ENCODE measurements at regions of chr22 and their contacts with region 1.

Region 1: GRCh38 chr22:21641789-21642583 is at the start of gene SDF2L1:
- DNase-seq: peak; percentile 99
- ATAC-seq: peak; percentile 98
- H3K4me3 Mint-ChIP-seq: peak within 1 kb of the TSS; percentile 83
- H3K27ac Mint-ChIP-seq: peak within 1 kb of the TSS; percentile 90
- H3K4me1 Mint-ChIP-seq: peaks cover 33% of the 10 kb centered on the region
- H3K27me3 Mint-ChIP-seq: no peaks in the 10 kb centered on the region
- total RNA-seq, gene SDF2L1: 78.7 to 79.1 TPM

Region 2: DNA sequence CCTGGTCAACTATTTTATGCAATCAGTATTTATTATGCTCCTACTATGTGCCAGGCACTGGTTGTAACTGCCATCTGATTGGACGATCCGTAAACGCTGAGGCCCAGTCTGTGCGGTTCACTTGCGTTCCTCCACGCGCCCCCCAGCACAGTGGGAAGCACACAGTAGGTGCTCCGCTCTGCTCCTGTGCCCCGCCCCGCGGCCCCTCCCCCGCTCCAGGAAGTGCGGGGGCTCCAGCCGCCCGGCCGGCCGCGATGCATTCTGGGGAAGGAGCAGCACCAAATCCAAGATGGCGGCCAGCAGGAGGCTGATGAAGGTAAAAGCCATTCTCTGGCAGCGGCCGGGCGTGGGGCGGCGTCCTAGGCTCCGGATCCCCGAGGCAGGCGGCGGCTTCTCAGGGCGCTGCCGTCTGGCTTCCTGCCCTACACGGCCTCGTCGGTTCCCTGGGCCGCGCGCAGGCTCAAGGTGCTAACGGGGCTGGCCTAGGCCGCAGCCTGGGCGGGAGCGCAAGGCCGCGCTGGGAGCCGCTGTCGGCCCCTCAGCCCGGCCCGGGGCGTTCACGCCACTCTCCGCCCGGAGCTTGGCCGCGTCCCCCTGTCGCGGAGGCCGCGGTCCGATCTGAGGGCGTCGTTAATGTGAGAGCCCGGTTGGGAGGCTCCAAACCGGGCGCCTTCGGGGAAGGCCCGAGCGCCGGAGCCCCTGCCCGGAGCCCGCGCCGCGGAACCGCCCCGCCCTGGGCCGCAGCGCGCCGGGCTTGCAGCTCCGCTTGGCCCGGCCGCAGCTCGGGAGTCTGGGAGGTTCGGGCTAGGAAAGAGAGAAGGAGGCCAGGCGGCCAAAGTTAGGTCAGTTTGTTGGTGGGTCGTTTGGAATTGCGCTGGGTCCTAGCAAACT is 74.3 kb before region 1 on chr22 and contains the start of gene UBE2L3:
- CTCF ChIA-PET with region 1: interaction called, 20 read pairs
- DNase-seq: peak; percentile 91
- ATAC-seq: peak; percentile 72
- H3K4me3 Mint-ChIP-seq: peak within 1 kb of the TSS; percentile 97
- H3K27ac Mint-ChIP-seq: peak within 1 kb of the TSS; percentile 93
- H3K4me1 Mint-ChIP-seq: peaks cover 40% of the 10 kb centered on the region
- H3K27me3 Mint-ChIP-seq: no peaks in the 10 kb centered on the region
- total RNA-seq, gene UBE2L3: 57.3 to 67.8 TPM

Region 3: DNA sequence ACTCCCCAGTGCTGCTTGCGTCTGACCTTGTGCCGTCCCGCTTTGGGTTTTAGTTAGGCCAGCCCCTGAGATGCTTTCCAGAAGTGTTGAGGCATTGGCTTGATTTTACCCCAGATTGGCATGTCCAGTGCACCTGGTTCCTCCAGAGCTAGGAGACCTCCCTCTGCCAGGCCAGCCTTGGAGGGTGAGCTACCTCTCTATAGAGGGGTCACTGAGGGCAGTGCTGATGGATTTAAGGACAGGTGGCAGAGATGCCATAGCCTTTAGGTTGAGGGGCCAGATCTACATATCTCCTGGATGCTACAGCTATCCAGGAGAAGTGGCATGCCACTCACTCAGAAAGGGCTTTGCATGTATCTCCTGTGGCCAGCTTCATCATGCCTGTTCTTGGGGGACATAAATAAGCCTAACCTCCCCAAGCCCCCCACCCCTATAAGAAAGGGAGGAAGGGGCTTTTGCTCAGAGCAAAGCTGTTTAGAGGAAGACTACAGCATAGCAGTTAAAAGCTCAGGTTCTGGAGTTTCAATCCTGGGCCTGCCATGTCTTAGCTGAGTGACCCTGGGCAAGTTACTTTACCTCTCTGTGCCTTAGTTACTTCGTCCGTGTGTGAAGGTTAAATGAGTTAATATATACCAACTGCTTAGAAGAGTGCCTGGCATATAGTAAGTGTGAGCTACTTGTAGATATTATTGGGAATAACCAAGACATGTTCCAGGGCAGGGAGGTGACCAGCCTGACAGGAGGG is 68.1 kb before region 1 on chr22:
- CTCF ChIA-PET with region 1: interaction called, 20 read pairs
- DNase-seq: no peak
- ATAC-seq: no peak
- H3K4me3 Mint-ChIP-seq: no peak overlapping the region
- H3K27ac Mint-ChIP-seq: no peak overlapping the region
- H3K4me1 Mint-ChIP-seq: peaks cover 60% of the 10 kb centered on the region
- H3K27me3 Mint-ChIP-seq: no peaks in the 10 kb centered on the region

Region 4: DNA sequence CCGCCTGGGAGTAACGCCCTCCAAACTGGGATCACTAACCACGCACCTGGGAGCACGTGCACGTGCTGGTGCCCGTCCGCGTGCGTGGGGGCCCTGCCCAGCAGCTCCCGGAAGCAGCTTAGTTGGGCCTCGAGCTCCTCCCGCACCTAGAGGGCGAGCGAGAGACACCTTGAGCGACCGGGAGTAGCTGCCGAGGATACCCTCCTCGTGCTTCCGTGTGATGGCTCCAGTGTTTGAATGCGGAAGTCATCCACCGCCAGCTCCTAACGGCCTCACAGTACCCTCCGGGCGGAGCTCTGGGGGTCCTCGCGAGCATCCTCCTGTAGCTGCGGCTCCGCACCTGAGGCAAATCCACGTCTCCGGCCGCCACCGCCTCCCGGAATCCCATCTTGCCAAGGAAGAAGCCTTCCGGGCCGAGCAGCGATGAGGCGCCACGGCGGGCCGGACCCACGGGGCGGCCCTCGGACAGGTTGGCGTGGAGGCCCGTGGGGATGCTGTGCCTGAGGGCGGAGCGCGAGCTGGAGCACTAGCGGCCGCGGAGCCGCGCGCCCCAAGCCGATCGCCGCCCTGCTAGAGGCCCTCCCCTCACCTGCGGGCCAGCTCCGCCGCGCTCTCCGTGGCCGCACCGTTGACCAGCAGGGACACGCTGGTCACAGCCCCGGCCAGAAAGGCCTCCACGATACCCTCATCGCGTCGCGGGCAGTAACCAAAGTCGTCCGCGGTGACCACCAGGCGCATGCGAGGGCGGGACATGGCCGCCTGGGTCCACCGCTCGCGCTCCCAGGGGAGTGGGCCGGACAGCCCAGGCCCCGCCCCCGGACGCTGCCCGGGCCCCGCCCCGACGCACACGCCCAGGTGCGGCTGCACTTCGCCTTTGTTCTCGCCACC is 12.5 kb before region 1 on chr22 and contains the start of gene YDJC:
- CTCF ChIA-PET with region 1: interaction called, 241 read pairs
- DNase-seq: peak; percentile 96
- ATAC-seq: peak; percentile 84
- H3K4me3 Mint-ChIP-seq: peak within 1 kb of the TSS; percentile 86
- H3K27ac Mint-ChIP-seq: peak within 1 kb of the TSS; percentile 93
- H3K4me1 Mint-ChIP-seq: peaks cover 47% of the 10 kb centered on the region
- H3K27me3 Mint-ChIP-seq: no peaks in the 10 kb centered on the region
- total RNA-seq, gene YDJC: 43.7 to 44.3 TPM

Region 5: GRCh38 chr22:21652010-21652546 is 10.1 kb after region 1 on chr22:
- CTCF ChIA-PET with region 1: interaction called, 44 read pairs
- DNase-seq: peak; percentile 94
- ATAC-seq: peak; percentile 99
- H3K4me3 Mint-ChIP-seq: peak overlapping the region; percentile 88
- H3K27ac Mint-ChIP-seq: peak overlapping the region; percentile 87
- H3K4me1 Mint-ChIP-seq: peaks cover 32% of the 10 kb centered on the region
- H3K27me3 Mint-ChIP-seq: no peaks in the 10 kb centered on the region

Region 6: DNA sequence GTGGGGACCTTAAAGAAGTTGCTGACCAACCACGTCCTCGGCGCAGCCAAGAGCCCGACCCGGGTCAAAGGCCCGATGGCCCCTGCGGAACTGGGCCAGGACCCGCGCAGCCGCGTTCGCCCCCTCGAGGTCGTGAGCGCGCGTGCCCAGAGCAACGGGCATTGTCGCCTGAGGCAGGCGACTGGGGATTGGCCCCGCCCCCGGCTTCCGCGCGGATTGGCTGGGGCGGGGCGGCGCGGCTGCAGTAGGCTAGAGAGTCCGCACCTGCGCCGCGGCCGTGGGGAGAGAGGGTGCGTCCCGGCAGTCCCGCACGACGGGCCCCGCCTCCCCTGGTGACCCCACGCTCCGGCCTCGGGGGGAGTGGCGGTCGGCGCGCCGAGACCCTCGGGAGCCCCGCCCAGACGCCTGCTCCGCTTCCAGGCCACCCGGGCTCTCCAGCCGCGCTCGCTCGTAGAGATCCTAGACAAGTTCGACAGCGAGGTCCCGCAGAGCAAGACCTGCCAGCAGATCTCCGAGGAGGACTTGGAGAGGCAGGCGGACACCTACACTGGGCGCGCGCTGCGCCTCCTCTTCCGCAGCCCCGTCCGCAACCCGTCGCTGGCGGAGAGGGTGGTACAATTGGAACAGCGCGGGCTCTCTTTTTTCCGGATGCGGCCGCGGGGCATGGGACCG is 15.5 kb after region 1 on chr22:
- CTCF ChIA-PET with region 1: interaction called, 44 read pairs
- DNase-seq: peak; percentile 85
- ATAC-seq: peak; percentile 96
- H3K4me3 Mint-ChIP-seq: peak overlapping the region; percentile 80
- H3K27ac Mint-ChIP-seq: peak overlapping the region; percentile 82
- H3K4me1 Mint-ChIP-seq: peaks cover 25% of the 10 kb centered on the region
- H3K27me3 Mint-ChIP-seq: no peaks in the 10 kb centered on the region

Measured in activated CD8-positive, alpha-beta memory T cell treated with anti-CD3 and anti-CD28 coated beads, Interleukin-2, amount 10 ng/mL, durations not matched to agents 7 days and 5 days (primary cell).